BJ (cell line): ENCODE measurements at regions of chr9 and their contacts with region 1.

Region 1: GRCh38 chr9:112443200-112443599 is 43.4 kb upstream of the KIAA1958 start:
- DNase-seq: no peak
- H3K4me3 ChIP-seq: no peak overlapping the region
- H3K27me3 ChIP-seq: no peaks in the 10 kb centered on the region
- CTCF ChIP-seq: peak; percentile 64

Region 2: GRCh38 chr9:112486221-112487007 is 43.2 kb after region 1 on chr9 and contains the start of gene KIAA1958:
- CTCF ChIA-PET with region 1: no interaction called
- POLR2A ChIA-PET with region 1: no interaction called
- DNase-seq: no peak
- H3K4me3 ChIP-seq: peak within 1 kb of the TSS; percentile 93
- H3K27me3 ChIP-seq: no peaks in the 10 kb centered on the region
- CTCF ChIP-seq: no peak
- polyA plus RNA-seq, gene KIAA1958: 1.7 and 2.2 TPM in 2 replicates

Region 3: DNA sequence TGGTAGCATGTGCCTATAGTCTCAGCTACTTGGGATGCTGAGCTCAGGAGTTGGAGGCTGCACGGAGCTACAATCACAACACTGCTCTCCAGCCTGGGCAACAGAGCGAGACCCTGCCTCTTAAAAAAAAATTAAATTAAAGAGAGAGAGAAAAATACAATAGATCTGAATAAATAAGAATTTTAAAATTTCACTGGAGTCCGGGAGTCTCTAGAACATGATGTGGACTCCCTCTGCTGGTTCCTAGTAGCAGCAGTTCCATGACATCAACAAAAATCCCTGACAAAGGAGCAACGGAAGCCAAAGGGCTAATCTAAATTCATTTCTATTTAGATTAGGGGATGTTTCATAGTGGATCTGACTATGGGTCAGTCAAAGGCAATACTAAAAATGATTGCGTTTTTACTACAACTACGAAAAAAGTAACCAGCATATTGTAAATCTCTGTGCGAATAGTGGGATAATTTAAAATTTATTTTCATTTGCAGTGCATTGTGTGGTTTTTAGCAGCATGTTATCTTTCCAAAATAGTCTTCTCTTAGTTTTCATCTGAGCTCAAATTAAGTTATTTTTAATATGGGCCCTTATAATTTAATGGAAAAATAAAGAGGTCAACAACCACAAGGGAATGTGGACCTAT is 268.0 kb after region 1 on chr9:
- CTCF ChIA-PET with region 1: interaction called, 21 read pairs
- POLR2A ChIA-PET with region 1: no interaction called
- DNase-seq: no peak
- H3K4me3 ChIP-seq: no peak overlapping the region
- H3K27me3 ChIP-seq: no peaks in the 10 kb centered on the region
- CTCF ChIP-seq: peak; percentile 77